MCF 10A (cell line): ENCODE measurements at regions of chr2 and their contacts with region 1.

Region 1: GRCh38 chr2:217886720-217887309 is 116.0 kb downstream of the TNS1 start:
- DNase-seq: peak; percentile 87
- H3K4me3 Mint-ChIP-seq: no peak overlapping the region
- H3K27ac Mint-ChIP-seq: no peak overlapping the region
- H3K4me1 Mint-ChIP-seq: no peaks in the 10 kb centered on the region
- H3K27me3 Mint-ChIP-seq: peaks cover 13% of the 10 kb centered on the region
- CTCF ChIP-seq: peak; percentile 75

Region 2: DNA sequence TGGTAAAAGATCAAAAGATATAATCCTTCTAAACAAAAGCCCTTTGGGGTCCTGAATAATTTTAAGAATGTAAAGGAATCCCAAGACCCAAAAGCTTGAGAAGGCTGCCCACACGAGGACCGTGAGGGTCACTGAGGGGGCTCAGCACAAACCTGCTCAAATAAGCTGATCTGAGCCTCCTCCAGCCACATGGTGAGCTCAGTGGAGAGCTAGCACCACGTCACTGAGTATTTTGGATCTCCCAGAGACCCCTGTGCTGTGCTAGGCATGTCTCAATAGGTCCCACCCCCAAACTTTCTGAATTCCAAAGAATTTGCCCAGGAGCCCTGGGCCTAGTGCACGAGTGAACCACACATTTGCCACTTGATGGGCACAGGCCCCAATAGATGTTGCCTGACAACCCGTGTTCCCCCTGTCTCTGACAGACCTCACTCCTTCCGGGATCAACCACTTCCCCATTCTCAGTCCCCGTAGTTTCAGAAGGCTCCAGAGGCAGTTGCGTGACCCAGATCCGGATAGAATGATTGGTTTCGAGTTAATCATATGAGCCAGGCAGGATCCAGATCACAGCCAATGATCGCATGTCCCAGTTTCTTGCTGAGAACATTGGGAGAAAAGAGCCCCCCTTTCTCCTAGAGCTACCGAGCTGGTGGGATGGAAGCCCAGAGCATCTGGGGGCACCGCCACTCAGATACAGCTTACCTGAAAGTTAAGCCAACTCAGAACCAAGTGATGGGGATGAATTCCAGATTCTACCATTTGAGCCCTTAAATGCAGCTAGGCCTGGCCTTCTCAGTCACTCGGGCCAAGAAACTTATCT is 87.9 kb before region 1 on chr2:
- CTCF ChIA-PET with region 1: interaction called, 678 read pairs
- POLR2A ChIA-PET with region 1: interaction called, 3 read pairs
- intact Hi-C with region 1: no loop called
- DNase-seq: no peak
- H3K4me3 Mint-ChIP-seq: no peak overlapping the region
- H3K27ac Mint-ChIP-seq: no peak overlapping the region
- H3K4me1 Mint-ChIP-seq: no peaks in the 10 kb centered on the region
- H3K27me3 Mint-ChIP-seq: no peaks in the 10 kb centered on the region
- CTCF ChIP-seq: no peak

Region 3: GRCh38 chr2:217812170-217812569 is 74.6 kb before region 1 on chr2:
- CTCF ChIA-PET with region 1: interaction called, 13 read pairs
- POLR2A ChIA-PET with region 1: no interaction called
- intact Hi-C with region 1: no loop called
- DNase-seq: no peak
- H3K4me3 Mint-ChIP-seq: no peak overlapping the region
- H3K27ac Mint-ChIP-seq: no peak overlapping the region
- H3K4me1 Mint-ChIP-seq: no peaks in the 10 kb centered on the region
- H3K27me3 Mint-ChIP-seq: no peaks in the 10 kb centered on the region
- CTCF ChIP-seq: no peak

Region 4: GRCh38 chr2:217851191-217852020 is 35.4 kb before region 1 on chr2:
- CTCF ChIA-PET with region 1: interaction called, 12 read pairs
- POLR2A ChIA-PET with region 1: no interaction called
- intact Hi-C with region 1: no loop called
- DNase-seq: peak; percentile 51
- H3K4me3 Mint-ChIP-seq: peak overlapping the region; percentile 9
- H3K27ac Mint-ChIP-seq: peak overlapping the region; percentile 49
- H3K4me1 Mint-ChIP-seq: peaks cover 25% of the 10 kb centered on the region
- H3K27me3 Mint-ChIP-seq: peaks cover 12% of the 10 kb centered on the region
- CTCF ChIP-seq: no peak

Region 5: DNA sequence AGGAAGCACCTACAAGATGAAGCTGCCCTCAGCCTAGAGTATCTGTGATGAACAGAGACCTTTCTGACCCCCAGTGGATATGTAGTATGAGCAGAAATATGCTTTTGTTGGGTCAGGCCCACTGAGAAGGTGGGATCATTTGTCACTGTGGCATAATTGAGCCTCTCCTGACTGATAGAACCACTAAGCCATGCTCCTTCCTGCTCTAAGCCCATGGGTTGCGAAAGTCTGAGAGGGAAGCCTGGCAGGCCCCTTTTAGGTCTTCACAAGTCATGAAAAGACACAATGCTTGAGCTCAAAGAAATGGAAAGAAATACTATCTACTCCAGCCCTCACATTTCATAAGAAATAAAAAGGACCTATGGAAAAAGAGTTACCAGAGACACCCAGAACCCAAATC is 11.7 kb before region 1 on chr2:
- CTCF ChIA-PET with region 1: interaction called, 12 read pairs
- POLR2A ChIA-PET with region 1: no interaction called
- intact Hi-C with region 1: no loop called
- DNase-seq: no peak
- H3K4me3 Mint-ChIP-seq: no peak overlapping the region
- H3K27ac Mint-ChIP-seq: no peak overlapping the region
- H3K4me1 Mint-ChIP-seq: no peaks in the 10 kb centered on the region
- H3K27me3 Mint-ChIP-seq: no peaks in the 10 kb centered on the region
- CTCF ChIP-seq: no peak

Region 6: DNA sequence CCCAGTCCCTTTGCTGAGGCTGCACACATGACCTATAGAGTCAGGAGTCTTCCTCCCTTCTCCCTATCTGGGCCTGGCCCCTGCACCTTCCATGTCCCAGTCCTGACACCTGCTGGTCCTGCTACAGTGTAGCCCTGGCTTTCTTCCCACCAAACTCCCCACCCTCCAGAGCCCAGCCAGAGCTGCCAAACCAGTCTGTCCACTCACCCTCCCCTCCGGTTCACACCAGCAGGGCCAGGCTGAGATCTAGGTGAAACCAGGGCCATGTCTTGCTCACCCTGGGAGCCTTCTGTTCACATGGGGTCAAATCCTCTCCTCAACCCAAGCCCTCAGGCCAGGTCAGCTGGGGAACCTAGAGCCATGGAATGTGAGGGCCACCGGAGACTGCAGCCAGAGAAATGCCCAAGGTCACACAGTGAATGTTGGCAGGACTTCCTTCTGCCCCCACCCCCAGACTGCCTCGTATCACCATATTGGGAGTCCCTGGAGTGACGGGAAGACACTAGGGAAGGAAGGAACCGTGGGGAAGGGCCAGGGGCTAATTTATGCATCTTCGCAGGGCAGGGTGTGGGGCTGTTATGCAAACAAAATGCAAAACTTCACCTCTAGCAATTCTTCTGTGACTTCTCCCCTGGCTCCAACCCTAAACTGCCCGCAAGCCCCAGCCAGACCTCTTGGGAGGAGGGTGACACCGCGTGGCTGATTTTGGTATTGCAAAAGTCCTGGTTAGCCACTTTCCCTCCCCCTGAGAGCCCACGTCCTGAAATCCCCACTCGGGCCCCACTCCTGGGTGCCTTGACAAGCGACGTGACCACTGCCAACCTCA is 101.4 kb after region 1 on chr2:
- CTCF ChIA-PET with region 1: interaction called, 37 read pairs
- POLR2A ChIA-PET with region 1: no interaction called
- intact Hi-C with region 1: loop called (anchors 1 kb)
- DNase-seq: peak; percentile 75
- H3K4me3 Mint-ChIP-seq: no peak overlapping the region
- H3K27ac Mint-ChIP-seq: no peak overlapping the region
- H3K4me1 Mint-ChIP-seq: peaks cover 7% of the 10 kb centered on the region
- H3K27me3 Mint-ChIP-seq: no peaks in the 10 kb centered on the region
- CTCF ChIP-seq: peak; percentile 93

Region 7: DNA sequence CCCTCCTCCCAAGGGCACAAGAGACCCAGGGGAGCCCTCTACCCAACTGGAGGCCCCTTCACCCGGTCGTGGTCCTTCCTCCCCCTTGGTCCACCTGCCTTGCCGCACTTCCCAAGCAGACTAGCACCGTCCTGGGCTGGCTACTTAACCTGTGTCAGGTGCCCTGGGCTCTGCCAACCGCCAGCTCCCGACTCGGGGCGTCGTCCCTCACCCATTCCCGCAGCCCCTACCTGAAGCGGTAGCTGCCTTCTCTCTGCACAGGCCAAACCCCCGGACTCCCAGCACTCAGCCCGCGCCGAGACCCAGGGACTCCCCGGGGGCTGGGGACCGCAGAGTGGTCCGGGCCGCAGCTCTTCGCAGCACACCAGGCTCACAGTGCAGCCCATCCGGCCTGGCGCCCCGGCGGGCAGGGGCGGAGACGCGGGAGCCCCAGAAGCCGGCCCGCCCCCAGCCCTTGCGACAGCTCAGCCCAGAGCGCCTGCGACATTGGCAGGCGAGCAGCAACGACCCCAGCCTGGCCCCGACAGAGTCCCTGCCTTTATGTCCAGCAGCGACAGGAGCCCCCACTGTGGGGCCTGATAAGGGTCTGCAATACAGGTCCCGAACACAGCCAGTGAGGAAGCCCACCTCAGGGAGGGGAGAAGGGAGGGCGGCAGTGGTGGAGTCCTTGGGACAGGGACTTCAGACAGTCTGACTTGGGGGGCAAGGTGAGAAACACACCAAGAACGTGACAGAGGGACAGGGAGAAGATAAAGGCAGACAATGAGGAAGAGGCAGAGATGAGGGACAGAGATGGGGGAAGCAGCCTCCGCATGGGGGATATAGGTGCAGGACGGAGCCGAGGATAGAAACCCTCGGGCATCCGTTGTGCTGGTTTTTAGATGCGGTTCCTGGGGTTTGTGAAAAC is 147.0 kb after region 1 on chr2:
- CTCF ChIA-PET with region 1: interaction called, 29 read pairs
- POLR2A ChIA-PET with region 1: no interaction called
- intact Hi-C with region 1: loop called (anchors 1 kb)
- DNase-seq: no peak
- H3K4me3 Mint-ChIP-seq: no peak overlapping the region
- H3K27ac Mint-ChIP-seq: no peak overlapping the region
- H3K4me1 Mint-ChIP-seq: no peaks in the 10 kb centered on the region
- H3K27me3 Mint-ChIP-seq: peaks cover 28% of the 10 kb centered on the region
- CTCF ChIP-seq: no peak

Region 8: GRCh38 chr2:218482651-218483050 is 595.8 kb after region 1 on chr2:
- CTCF ChIA-PET with region 1: no interaction called
- POLR2A ChIA-PET with region 1: no interaction called
- intact Hi-C with region 1: no loop called
- DNase-seq: no peak
- H3K4me3 Mint-ChIP-seq: no peak overlapping the region
- H3K27ac Mint-ChIP-seq: no peak overlapping the region
- H3K4me1 Mint-ChIP-seq: no peaks in the 10 kb centered on the region
- H3K27me3 Mint-ChIP-seq: no peaks in the 10 kb centered on the region
- CTCF ChIP-seq: no peak